Heart right ventricle (tissue), 16 donors: ENCODE measurements at regions of chr16 and their contacts with region 1.

Region 1: GRCh38 chr16:75555707-75556430 is at the start of gene TMEM231:
- DNase-seq: peak; percentile 98
- ATAC-seq: peak; percentile 96 to 97 (median 97)
- H3K4me3 ChIP-seq: peak within 1 kb of the TSS; percentile 47 to 89 (median 72)
- H3K27ac ChIP-seq: peak within 1 kb of the TSS; percentile 57 to 90 (median 86)
- H3K4me1 ChIP-seq: peaks cover 5 to 43% (median 15%) of the 10 kb centered on the region in 9 donors
- H3K27me3 ChIP-seq: no peaks in the 10 kb centered on the region
- CTCF ChIP-seq: peak in 1 of 9 donors; percentile 15
- total RNA-seq, gene TMEM231: 3.8 to 13.4 (median 9.6) TPM

Region 2: GRCh38 chr16:75566040-75566810 is 10.4 kb after region 1 on chr16 and contains the start of gene GABARAPL2:
- intact Hi-C with region 1: loop called in 1 of 10 experiments (anchors 1 kb)
- DNase-seq: peak; percentile 77 to 89
- ATAC-seq: peak; percentile 93 to 97 (median 94)
- H3K4me3 ChIP-seq: peak within 1 kb of the TSS; percentile 88 to 100 (median 96)
- H3K27ac ChIP-seq: peak within 1 kb of the TSS; percentile 73 to 95 (median 90)
- H3K4me1 ChIP-seq: peaks cover 30 to 58% (median 55%) of the 10 kb centered on the region in 9 donors
- H3K27me3 ChIP-seq: no peaks in the 10 kb centered on the region
- CTCF ChIP-seq: no peak
- total RNA-seq, gene GABARAPL2: 177 to 262 (median 243) TPM

Region 3: GRCh38 chr16:75590920-75591843 is 35.3 kb after region 1 on chr16:
- intact Hi-C with region 1: loop called in 1 of 10 experiments (anchors 1 kb)
- DNase-seq: peak; percentile 45 to 87
- ATAC-seq: peak; percentile 88 to 94 (median 91)
- H3K4me3 ChIP-seq: peak overlapping the region in 1 of 10 donors; percentile 8
- H3K27ac ChIP-seq: peak overlapping the region; percentile 51 to 94 (median 81)
- H3K4me1 ChIP-seq: peaks cover 10 to 70% (median 55%) of the 10 kb centered on the region in 9 donors
- H3K27me3 ChIP-seq: no peaks in the 10 kb centered on the region
- CTCF ChIP-seq: peak in 4 of 9 donors; percentile 29 to 51 (median 38)

Region 4: GRCh38 chr16:75647492-75648264 is 91.8 kb after region 1 on chr16 and contains the starts of genes KARS1 and TERF2IP:
- intact Hi-C with region 1: loop called in 1 of 10 experiments (anchors 5 kb)
- DNase-seq: peak; percentile 92 to 93
- ATAC-seq: peak; percentile 97 to 98 (median 98)
- H3K4me3 ChIP-seq: peak within 1 kb of the TSS; percentile 62 to 100 (median 96)
- H3K27ac ChIP-seq: peak within 1 kb of the TSS; percentile 90 to 99 (median 98)
- H3K4me1 ChIP-seq: peaks cover 0 to 65% (median 60%) of the 10 kb centered on the region in 9 donors
- H3K27me3 ChIP-seq: no peaks in the 10 kb centered on the region
- CTCF ChIP-seq: no peak
- total RNA-seq, gene KARS1: 123 to 145 (median 129) TPM
- total RNA-seq, gene TERF2IP: 49.1 to 79.3 (median 64.5) TPM